Activated T-helper 1 cell treated with anti-CD3 and anti-CD28 coated beads, Interleukin-12 subunit alpha, Interleukin-12 subunit beta, Interleukin-2, Interleukin-4 antibody, amounts not matched to agents 30 ng/mL and 10 ng/mL and 1 ng/mL, durations not matched to agents 14 hours and 24 hours and 36 hours (primary cell): ENCODE measurements at regions of chr17 and their contacts with region 1.

Region 1: DNA sequence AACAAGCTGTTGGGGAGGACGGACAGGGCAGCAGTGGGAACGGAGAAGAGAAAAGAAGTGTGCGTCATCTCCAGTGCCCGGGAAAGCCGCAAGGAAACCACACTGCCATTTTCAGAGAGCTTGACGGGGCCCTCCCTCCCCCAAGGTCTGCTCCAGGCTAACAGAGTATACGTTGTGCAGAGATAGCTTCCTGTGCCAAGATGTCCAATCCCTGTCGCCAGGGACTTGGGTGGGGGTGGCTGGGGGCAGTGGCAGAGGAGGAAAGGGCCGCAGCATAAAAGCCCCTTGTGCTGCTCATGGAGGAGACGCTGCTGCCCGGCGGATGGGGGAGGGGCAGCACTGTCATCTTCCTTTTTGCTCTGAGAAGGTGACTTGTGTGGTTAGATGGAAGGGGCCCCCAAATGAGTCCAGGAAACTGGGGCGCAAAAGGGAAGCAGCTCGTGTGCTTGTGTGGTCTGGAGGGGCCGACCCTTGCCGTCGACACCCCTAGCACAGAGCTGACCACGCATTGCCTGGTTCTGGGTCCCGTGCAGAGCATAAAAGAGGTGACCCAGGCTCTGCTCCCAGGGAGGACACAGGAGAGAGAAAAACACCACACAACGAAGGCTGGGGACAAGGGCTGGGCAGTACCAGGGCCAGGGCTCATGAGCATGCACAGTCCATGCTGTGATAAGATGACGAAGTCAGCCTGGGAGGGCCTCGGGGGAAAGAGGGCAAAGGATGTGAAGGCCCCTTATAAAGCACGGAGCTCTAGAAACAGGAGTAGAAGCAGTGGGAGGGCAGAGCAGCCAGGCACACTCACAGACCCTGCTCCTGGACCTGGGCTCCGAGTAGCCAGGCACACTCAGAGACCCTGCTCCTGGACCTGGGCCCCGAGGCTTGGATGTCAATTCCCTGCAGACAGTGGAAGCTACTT is 372.7 kb downstream of the SLC39A11 start:
- DNase-seq: peak; percentile 62
- H3K4me3 Mint-ChIP-seq: peak overlapping the region; percentile 68
- H3K27ac Mint-ChIP-seq: peak overlapping the region; percentile 81
- H3K4me1 Mint-ChIP-seq: peaks cover 47% of the 10 kb centered on the region
- H3K27me3 Mint-ChIP-seq: peaks cover 4% of the 10 kb centered on the region

Region 2: GRCh38 chr17:72657467-72658317 is 62.1 kb before region 1 on chr17:
- intact Hi-C with region 1: no loop called
- DNase-seq: no peak
- H3K4me3 Mint-ChIP-seq: no peak overlapping the region
- H3K27ac Mint-ChIP-seq: no peak overlapping the region
- H3K4me1 Mint-ChIP-seq: no peaks in the 10 kb centered on the region
- H3K27me3 Mint-ChIP-seq: no peaks in the 10 kb centered on the region

Region 3: DNA sequence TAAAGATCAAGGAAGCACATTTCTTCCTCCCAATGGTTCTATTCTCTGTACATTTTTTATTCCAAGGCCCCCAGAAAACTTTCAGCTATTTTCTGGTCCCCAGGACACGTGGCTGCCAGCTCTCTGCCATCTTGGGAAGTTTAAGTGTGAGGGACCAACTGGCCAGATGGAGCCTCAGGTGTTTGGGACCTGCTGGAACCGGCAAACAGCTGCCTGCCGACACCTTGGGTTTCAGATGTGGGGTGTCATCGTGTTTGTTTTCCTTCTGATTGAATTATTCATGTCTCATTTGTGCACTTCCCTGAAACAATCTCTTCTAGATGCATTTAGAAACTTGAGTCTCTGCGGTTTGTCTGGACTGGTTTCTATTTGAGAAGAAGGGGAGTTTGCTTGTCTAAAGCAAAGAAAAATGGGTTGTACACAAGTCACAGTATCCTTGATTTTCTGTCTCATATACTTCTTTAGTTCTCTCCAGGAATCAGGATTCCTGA is 13.9 kb before region 1 on chr17:
- intact Hi-C with region 1: loop called (anchors 1 kb)
- DNase-seq: no peak
- H3K4me3 Mint-ChIP-seq: peak overlapping the region; percentile 45
- H3K27ac Mint-ChIP-seq: peak overlapping the region; percentile 89
- H3K4me1 Mint-ChIP-seq: peaks cover 58% of the 10 kb centered on the region
- H3K27me3 Mint-ChIP-seq: no peaks in the 10 kb centered on the region